ENCODE measurements at regions of chr2 and their contacts with region 1.

Region 1: GRCh38 chr2:27566628-27567027 is 16.2 kb upstream of the ZNF512 start:
- DNase-seq: no peak
- ATAC-seq: no peak
- H3K4me3 ChIP-seq: no peak overlapping the region
- H3K27ac ChIP-seq: no peak overlapping the region
- H3K4me1 ChIP-seq: no peaks in the 10 kb centered on the region
- H3K27me3 ChIP-seq: peaks cover 0 to 36% (median 0%) of the 10 kb centered on the region in 9 donors
- CTCF ChIP-seq: no peak
- POLR2A ChIP-seq: no peak

Region 2: DNA sequence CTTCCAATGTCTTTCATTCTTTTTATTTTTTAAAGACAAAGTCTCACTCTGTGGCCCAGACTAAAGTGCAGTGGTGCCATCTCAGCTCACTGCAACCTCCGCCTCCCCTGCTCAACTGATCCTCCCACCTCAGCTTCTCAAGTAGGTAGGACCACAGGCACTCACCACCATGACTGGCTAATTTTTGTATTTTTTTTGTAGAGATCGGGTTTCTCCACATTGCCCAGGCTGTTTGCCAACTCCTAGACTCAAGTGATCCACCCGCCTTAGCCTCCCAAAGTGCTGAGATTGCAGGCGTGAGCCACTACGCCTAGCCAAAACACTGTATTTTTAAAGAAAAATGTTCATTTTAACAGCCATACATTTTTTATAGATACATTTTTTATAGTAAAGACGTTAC is 57.3 kb before region 1 on chr2:
- intact Hi-C with region 1: loop called in 1 of 10 experiments (anchors 10 kb)
- DNase-seq: no peak
- ATAC-seq: no peak
- H3K4me3 ChIP-seq: no peak overlapping the region
- H3K27ac ChIP-seq: no peak overlapping the region
- H3K4me1 ChIP-seq: no peaks in the 10 kb centered on the region
- H3K27me3 ChIP-seq: peaks cover 0 to 5% (median 0%) of the 10 kb centered on the region in 9 donors
- CTCF ChIP-seq: no peak
- POLR2A ChIP-seq: no peak